ENCODE measurements at regions of chr3 and their contacts with region 1.

Region 1: GRCh38 chr3:4850928-4851265 is 128.3 kb upstream of the BHLHE40 start:
- DNase-seq: peak; percentile 43
- H3K4me3 Mint-ChIP-seq: peak overlapping the region; percentile 53
- H3K27ac Mint-ChIP-seq: peak overlapping the region; percentile 88
- H3K4me1 Mint-ChIP-seq: peaks cover 88% of the 10 kb centered on the region
- H3K27me3 Mint-ChIP-seq: no peaks in the 10 kb centered on the region

Region 2: DNA sequence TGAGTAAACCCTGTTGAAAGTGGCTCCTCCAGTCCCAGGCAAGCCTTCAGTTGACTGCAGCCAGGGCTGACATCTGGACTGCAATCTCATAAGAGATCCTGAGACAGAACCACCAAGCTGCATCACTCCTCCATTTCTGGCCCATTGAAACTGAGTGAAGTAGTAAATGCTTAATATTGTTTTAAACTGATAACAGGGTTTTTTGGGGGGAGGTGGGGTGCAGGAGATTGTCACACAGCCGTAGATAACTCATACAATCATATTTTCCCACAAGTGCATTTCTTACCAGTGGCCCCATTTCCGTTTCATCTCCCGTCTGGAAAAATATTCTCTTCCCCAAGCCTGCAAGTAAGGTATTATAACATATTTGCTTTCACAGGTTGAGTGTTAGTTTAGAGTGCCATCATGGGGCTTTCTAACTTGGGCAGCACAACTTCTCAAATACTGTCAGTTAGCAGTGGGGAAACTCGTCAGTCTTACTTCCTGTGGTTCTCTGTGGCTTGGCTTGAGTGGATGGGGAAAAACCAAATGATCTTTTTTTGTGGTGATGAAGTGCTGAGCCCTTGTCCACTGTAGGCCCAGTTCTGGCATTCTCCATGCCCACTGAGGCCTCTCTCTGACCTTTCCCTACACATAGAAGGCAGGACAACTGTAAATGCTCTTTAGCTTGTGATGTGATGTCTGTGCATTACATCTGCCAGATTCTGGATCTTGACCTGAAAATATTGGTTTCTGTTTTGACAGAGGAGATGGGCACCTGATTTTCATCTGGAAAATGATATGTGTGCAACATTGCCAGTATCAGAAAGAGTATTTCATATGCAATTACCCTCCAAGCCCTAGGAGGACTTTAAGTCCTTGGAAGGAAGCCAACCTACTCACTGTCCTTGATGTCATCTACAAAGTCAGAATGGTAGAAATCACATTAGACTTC is 38.3 kb after region 1 on chr3:
- CTCF ChIA-PET with region 1: no interaction called
- POLR2A ChIA-PET with region 1: no interaction called
- intact Hi-C with region 1: loop called (anchors 1 kb)
- DNase-seq: peak; percentile 67
- H3K4me3 Mint-ChIP-seq: no peak overlapping the region
- H3K27ac Mint-ChIP-seq: peak overlapping the region; percentile 90
- H3K4me1 Mint-ChIP-seq: peaks cover 31% of the 10 kb centered on the region
- H3K27me3 Mint-ChIP-seq: no peaks in the 10 kb centered on the region

Region 3: DNA sequence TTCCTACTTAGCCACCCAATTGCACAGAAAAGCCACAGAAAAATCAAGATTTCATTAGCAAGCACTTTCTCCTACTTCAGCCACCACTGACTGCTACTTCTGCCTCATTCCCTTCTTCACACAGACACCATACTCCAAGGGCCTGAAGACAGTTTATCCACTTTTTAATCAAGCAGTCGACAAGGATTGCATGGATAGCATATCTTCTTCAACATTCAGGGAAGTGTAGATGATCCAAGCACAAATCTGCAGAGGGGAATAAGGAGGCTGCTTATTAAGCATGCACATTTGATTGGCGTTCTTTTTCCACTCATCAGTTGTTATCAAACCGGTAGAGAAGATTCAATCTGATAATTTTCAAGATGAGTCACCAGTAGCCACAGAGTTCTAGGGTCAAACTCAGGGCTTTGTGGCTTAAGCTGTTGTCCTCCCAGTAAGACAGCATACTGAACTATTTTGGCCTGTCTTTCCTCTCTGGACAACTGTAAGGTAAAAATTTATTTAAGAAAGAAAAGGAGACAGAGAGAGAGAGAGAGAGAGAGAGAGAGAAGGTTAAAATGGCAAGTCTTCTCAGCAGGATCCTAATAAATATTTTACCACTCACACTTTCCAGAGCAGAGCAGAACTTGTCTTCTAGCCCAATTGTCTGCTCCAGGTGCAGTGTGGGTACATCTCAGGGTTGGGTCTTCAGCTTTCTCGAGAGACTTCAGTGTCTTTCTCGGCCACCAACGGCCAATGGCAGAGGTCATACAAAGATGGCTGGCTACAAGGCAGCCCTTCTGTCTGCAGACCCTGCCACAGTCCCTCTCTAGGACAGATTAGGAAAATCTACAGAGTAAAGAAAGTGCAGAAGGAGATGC is 47.8 kb after region 1 on chr3:
- CTCF ChIA-PET with region 1: interaction called, 4 read pairs
- POLR2A ChIA-PET with region 1: no interaction called
- intact Hi-C with region 1: loop called (anchors 2 kb)
- DNase-seq: peak; percentile 25
- H3K4me3 Mint-ChIP-seq: peak overlapping the region; percentile 51
- H3K27ac Mint-ChIP-seq: peak overlapping the region; percentile 79
- H3K4me1 Mint-ChIP-seq: peaks cover 52% of the 10 kb centered on the region
- H3K27me3 Mint-ChIP-seq: no peaks in the 10 kb centered on the region

Region 4: GRCh38 chr3:4986782-4987537 is 136.1 kb after region 1 on chr3:
- CTCF ChIA-PET with region 1: interaction called, 5 read pairs
- POLR2A ChIA-PET with region 1: interaction called, 26 read pairs
- intact Hi-C with region 1: no loop called
- DNase-seq: peak; percentile 86
- H3K4me3 Mint-ChIP-seq: peak overlapping the region; percentile 77
- H3K27ac Mint-ChIP-seq: peak overlapping the region; percentile 87
- H3K4me1 Mint-ChIP-seq: peaks cover 60% of the 10 kb centered on the region
- H3K27me3 Mint-ChIP-seq: no peaks in the 10 kb centered on the region